Activated T-helper 1 cell treated with anti-CD3 and anti-CD28 coated beads, Interleukin-12 subunit alpha, Interleukin-12 subunit beta, Interleukin-2, Interleukin-4 antibody, amounts not matched to agents 30 ng/mL and 10 ng/mL and 1 ng/mL, durations not matched to agents 14 hours and 24 hours and 36 hours (primary cell): ENCODE measurements at regions of chr2 and their contacts with region 1.

Region 1: GRCh38 chr2:12293874-12294273 is 422.9 kb upstream of the TRIB2 start:
- DNase-seq: peak; percentile 27
- H3K4me3 Mint-ChIP-seq: peak overlapping the region; percentile 35
- H3K27ac Mint-ChIP-seq: peak overlapping the region; percentile 69
- H3K4me1 Mint-ChIP-seq: peaks cover 49% of the 10 kb centered on the region
- H3K27me3 Mint-ChIP-seq: peaks cover 3% of the 10 kb centered on the region

Region 2: DNA sequence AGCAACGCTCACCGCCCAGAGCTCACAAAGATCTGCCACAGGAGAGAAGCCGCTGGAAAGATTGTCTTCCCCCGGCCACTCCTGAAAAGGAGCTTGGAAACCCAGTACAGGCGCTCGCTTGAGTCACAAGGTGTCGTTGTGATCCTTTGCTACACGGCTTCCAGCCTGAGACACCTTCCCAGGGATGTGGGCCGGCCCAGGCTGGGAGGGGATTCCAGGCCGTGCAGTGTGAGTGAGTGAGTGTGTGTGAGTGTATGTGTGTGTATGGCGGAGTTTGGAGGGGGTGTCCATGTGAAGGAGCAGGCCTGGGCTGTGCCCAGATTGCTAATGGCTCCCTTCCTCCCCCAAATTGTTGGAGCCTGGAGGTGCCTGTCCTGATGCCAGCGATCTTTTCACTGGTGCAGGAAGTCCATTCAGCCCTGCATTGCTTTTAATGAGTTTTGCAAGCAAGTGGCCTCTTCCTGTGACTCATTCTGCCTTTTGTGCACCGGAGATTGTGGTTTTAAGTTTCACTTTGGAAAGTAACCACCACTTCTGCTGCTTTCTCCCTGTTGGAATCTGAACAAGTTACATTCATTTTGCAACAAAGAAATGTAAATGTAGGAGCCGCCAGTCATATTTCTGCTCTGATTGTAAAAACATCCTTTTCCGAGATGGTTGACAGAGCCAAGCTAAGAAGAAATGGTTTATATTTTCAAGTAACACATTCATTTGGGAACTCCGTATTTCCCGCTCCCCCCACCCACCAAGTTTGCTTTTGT is 463.7 kb before region 1 on chr2:
- intact Hi-C with region 1: loop called (anchors 1 kb)
- DNase-seq: peak; percentile 59
- H3K4me3 Mint-ChIP-seq: peak overlapping the region; percentile 76
- H3K27ac Mint-ChIP-seq: peak overlapping the region; percentile 75
- H3K4me1 Mint-ChIP-seq: peaks cover 44% of the 10 kb centered on the region
- H3K27me3 Mint-ChIP-seq: peaks cover 37% of the 10 kb centered on the region

Region 3: DNA sequence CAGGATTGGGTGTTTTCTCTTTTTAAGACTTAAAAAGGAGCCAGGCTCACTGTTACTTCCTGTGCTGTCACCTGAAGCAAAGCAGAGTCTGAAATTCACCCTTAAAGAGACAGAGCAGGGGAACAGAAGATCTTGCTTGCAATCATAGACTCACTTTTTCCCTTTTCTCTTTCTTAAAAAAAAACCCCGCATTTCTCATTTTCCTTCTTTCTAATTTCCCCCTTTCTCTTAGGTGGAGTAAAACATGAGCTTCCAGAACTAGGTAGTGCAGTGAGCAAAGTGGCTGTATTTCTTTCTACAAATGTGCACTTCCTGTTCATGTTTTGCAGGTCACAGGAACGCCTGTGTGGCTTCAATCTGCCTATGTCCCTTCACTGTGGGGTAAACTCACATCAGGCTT is 166.2 kb before region 1 on chr2:
- intact Hi-C with region 1: loop called (anchors 5 kb)
- DNase-seq: no peak
- H3K4me3 Mint-ChIP-seq: peak overlapping the region; percentile 15
- H3K27ac Mint-ChIP-seq: peak overlapping the region; percentile 55
- H3K4me1 Mint-ChIP-seq: no peaks in the 10 kb centered on the region
- H3K27me3 Mint-ChIP-seq: peaks cover 5% of the 10 kb centered on the region

Region 4: GRCh38 chr2:12416600-12416999 is 122.7 kb after region 1 on chr2:
- intact Hi-C with region 1: loop called (anchors 5 kb)
- DNase-seq: peak; percentile 41
- H3K4me3 Mint-ChIP-seq: no peak overlapping the region
- H3K27ac Mint-ChIP-seq: no peak overlapping the region
- H3K4me1 Mint-ChIP-seq: peaks cover 65% of the 10 kb centered on the region
- H3K27me3 Mint-ChIP-seq: peaks cover 2% of the 10 kb centered on the region

Region 5: DNA sequence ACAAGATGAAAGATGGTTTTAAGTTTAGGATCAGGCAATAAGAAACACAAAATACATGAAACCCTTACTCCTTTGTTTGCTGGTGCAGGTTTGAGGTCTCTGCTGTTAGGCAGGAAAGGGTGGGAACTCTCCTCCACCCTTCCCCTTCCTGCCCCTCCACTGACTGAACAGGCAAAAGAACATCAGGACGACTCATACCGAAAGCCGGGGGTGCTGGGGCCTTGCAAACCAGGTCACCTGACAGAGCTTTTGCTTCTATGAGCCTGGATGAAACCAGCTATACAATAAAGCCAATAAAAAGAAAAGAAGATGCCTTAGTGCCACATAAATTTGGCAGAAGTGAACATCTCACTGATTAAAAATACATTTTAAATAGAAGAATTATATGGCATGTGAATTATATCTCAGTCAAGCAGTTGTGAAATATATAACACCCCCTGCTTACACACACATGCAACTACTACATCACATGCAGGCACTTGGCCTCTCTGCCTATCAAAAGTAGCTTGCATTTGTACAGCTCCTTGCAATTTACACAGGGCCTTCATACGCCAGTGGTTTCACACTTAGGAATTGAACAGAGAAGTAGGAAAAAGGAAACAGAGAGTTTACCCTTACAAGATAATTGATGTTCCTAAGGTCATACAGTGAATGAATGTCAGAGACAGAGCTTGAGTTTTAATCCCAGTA is 207.7 kb after region 1 on chr2:
- intact Hi-C with region 1: loop called (anchors 1 kb)
- DNase-seq: peak; percentile 79
- H3K4me3 Mint-ChIP-seq: peak overlapping the region; percentile 34
- H3K27ac Mint-ChIP-seq: peak overlapping the region; percentile 89
- H3K4me1 Mint-ChIP-seq: peaks cover 92% of the 10 kb centered on the region
- H3K27me3 Mint-ChIP-seq: no peaks in the 10 kb centered on the region

Region 6: DNA sequence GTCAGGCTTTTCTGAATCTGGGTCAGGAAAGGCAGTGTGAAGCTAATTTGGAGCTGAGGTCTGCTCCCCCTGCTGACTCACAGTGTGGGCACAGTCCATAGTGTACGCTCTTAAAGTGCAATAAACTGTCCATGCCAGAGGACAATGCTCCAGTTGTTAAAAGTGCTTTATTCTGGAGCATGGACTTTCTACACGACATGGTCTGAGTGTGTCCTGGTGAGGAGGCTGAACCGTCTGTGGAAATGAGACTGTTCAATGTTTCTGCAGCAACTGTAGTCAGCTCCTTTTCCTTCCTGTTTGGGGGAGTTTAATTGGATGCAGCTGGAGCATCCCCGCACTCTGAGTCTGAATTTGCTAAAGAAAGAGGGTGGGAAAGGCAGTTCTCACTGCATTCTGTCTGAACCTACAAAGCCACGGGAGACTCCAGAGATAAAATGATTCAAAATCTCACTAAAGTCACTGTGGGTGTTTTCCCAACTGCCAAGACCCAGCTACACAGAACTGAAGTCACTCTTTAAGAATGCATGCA is 312.7 kb after region 1 on chr2:
- intact Hi-C with region 1: loop called (anchors 5 kb)
- DNase-seq: no peak
- H3K4me3 Mint-ChIP-seq: no peak overlapping the region
- H3K27ac Mint-ChIP-seq: no peak overlapping the region
- H3K4me1 Mint-ChIP-seq: peaks cover 15% of the 10 kb centered on the region
- H3K27me3 Mint-ChIP-seq: peaks cover 15% of the 10 kb centered on the region

Region 7: DNA sequence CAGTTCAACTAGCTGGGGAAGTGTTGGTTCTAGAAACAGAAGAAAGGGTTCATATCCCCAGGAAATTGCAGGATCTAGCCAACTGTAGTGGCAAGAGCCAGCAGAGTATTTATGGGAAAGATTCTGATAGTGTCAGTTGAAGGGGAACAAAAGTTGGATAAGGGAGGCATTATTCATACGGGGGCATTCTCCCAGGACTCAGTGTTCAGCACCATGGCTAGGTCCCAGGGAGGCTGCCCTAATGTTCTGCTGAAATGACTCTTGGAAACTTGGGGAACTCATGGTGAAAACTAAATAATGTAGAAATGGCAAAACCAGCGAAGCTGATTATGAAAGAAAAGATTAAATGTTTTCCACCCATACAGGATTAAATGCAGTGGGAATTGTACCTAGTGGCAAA is 966.5 kb after region 1 on chr2:
- intact Hi-C with region 1: no loop called
- DNase-seq: no peak
- H3K4me3 Mint-ChIP-seq: no peak overlapping the region
- H3K27ac Mint-ChIP-seq: no peak overlapping the region
- H3K4me1 Mint-ChIP-seq: no peaks in the 10 kb centered on the region
- H3K27me3 Mint-ChIP-seq: no peaks in the 10 kb centered on the region

Region 8: GRCh38 chr2:13725945-13726344 is 1432.1 kb after region 1 on chr2:
- intact Hi-C with region 1: no loop called
- DNase-seq: no peak
- H3K4me3 Mint-ChIP-seq: no peak overlapping the region
- H3K27ac Mint-ChIP-seq: no peak overlapping the region
- H3K4me1 Mint-ChIP-seq: no peaks in the 10 kb centered on the region
- H3K27me3 Mint-ChIP-seq: no peaks in the 10 kb centered on the region